ENCODE measurements at regions of chr17 and their contacts with region 1.

Region 1: GRCh38 chr17:74864866-74865395 is 5.2 kb upstream of the GRIN2C start:
- DNase-seq: peak; percentile 62 to 94 (median 86)

Region 2: DNA sequence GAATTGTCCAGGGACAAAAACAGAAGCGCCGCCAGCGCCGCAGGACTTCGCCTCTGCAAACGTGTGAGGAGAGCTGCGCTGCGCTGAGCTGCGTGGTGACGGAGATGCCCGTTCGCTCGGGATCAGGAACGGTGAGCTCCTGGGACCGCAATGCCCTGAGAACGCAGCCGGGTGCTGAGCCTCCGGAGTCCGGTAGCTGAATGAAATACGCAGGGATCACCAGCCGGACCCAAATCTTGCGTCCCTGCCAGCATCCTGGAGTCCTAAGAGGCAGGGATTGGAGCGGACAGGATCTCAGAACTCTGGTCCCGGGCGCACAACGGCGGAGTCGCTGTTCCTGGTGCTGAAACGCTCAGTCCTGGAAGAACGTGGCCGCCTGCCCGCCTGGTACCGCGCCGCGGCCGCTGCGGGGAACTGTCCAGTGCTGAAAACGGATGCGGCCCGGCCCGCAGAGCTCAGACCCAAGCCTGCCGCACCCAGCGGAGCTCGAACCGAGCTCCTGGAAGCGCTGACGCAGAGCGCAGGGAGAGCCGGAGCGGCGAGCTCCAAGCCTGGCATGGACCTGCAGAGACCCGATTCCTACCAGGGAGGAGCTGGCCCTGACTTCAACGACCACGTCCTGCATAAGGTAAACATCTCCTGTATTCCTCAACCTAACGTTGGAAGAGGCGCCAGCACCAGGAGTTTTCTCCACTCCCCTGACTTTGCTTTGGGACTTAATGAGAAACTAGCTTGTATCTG is 193.7 kb before region 1 on chr17:
- intact Hi-C with region 1: no loop called
- DNase-seq: peak in 41 of 42 donors; percentile 15 to 71 (median 49)

Region 3: DNA sequence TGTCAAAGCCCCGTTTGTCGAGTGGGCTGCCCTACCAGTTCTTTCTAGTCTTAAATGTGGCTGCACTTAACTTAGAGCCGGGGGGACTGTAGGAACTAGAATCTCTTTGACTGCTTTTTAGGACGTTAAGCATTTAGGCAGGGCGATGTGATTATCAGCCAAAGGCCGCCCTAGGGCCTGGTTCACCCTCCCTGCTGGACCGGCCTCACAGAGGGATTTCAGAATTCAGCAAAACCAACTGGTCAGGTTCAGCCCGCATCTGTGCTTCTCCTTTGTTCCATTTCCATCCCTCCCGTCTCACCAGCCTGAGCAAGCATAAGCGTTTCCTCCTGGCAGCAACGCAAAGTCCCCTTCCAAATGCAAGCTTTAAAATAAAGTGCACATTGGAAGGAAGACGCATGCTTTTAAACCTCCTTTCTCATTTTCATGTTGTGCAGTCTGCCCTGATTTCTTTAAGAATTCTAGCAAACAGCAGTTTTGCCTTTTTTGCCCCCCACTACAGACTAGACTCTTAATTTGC is 72.3 kb before region 1 on chr17:
- intact Hi-C with region 1: loop called (anchors 2 kb)
- DNase-seq: no peak

Measured in head of caudate nucleus (tissue), 42 donors.